GM13976 (cell line): ENCODE measurements at regions of chr9 and their contacts with region 1.

Region 1: GRCh38 chr9:36102742-36103495 is 33.6 kb upstream of the GLIPR2 start:
- DNase-seq: peak; percentile 79
- CTCF ChIP-seq: peak; percentile 71

Region 2: GRCh38 chr9:36166101-36166927 is 63.4 kb after region 1 on chr9:
- in situ Hi-C with region 1: loop called (anchors 5 kb)
- DNase-seq: peak; percentile 96
- CTCF ChIP-seq: peak; percentile 99

Region 3: GRCh38 chr9:36268007-36268427 is 165.1 kb after region 1 on chr9:
- in situ Hi-C with region 1: no loop called
- DNase-seq: no peak
- CTCF ChIP-seq: no peak